Psoas muscle (tissue), 8 donors: ENCODE measurements at regions of chr5 and their contacts with region 1.

Region 1: GRCh38 chr5:168987543-168988300 is 313.2 kb downstream of the SLIT3 start:
- DNase-seq: peak; percentile 58 to 70
- ATAC-seq: peak in 3 of 4 donors; percentile 34 to 62 (median 58)
- H3K4me3 ChIP-seq: no peak overlapping the region
- H3K27ac ChIP-seq: no peak overlapping the region
- H3K4me1 ChIP-seq: no peaks in the 10 kb centered on the region
- H3K27me3 ChIP-seq: no peaks in the 10 kb centered on the region
- CTCF ChIP-seq: peak; percentile 83

Region 2: GRCh38 chr5:168679515-168679920 is 308.2 kb before region 1 on chr5:
- intact Hi-C with region 1: loop called in 1 of 2 experiments (anchors 10 kb)
- DNase-seq: peak; percentile 53 to 74
- ATAC-seq: peak in 3 of 4 donors; percentile 37 to 65 (median 63)
- H3K4me3 ChIP-seq: no peak overlapping the region
- H3K27ac ChIP-seq: no peak overlapping the region
- H3K4me1 ChIP-seq: no peaks in the 10 kb centered on the region
- H3K27me3 ChIP-seq: no peaks in the 10 kb centered on the region
- CTCF ChIP-seq: peak; percentile 85

Region 3: DNA sequence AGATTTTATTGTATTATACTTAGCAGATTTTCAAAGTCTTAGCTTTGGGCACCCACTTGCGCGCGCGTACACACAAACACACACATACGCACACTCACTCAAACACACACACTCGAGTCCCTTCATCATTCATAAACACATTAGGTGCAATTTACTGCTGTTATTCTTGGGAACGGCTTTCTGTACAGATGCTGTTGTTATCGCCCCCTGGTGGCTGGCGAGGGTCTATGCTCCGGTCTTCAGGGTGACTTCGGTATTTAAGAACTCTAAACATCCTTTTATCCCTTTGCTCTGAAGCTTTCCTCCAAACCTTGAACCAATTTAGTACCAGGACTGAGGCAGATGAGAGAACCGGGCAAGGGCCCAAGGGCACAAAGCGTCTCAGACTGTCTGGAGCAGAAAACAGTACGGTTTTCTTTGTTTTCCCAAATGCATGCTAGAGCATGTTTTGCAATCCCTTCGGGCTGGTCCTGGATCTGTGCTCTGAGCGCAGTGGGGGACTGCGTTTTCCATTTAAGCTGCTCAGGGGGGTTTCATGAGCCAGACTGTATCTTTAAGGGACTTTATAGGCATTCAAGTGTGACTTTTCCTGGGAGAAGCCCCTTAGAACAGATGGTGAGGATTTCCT is 314.9 kb after region 1 on chr5:
- intact Hi-C with region 1: loop called (anchors 2 to 5 kb)
- DNase-seq: peak; percentile 67 to 75
- ATAC-seq: peak in 2 of 4 donors; percentile 41 to 70
- H3K4me3 ChIP-seq: no peak overlapping the region
- H3K27ac ChIP-seq: no peak overlapping the region
- H3K4me1 ChIP-seq: no peaks in the 10 kb centered on the region
- H3K27me3 ChIP-seq: peaks cover 0 to 49% (median 18%) of the 10 kb centered on the region in 3 donors
- CTCF ChIP-seq: peak; percentile 76

Region 4: GRCh38 chr5:169567079-169567478 is 579.4 kb after region 1 on chr5:
- intact Hi-C with region 1: loop called in 1 of 2 experiments (anchors 5 kb)
- DNase-seq: no peak
- ATAC-seq: no peak
- H3K4me3 ChIP-seq: no peak overlapping the region
- H3K27ac ChIP-seq: no peak overlapping the region
- H3K4me1 ChIP-seq: no peaks in the 10 kb centered on the region
- H3K27me3 ChIP-seq: peaks cover 3 to 10% (median 5%) of the 10 kb centered on the region in 3 donors
- CTCF ChIP-seq: no peak

Region 5: DNA sequence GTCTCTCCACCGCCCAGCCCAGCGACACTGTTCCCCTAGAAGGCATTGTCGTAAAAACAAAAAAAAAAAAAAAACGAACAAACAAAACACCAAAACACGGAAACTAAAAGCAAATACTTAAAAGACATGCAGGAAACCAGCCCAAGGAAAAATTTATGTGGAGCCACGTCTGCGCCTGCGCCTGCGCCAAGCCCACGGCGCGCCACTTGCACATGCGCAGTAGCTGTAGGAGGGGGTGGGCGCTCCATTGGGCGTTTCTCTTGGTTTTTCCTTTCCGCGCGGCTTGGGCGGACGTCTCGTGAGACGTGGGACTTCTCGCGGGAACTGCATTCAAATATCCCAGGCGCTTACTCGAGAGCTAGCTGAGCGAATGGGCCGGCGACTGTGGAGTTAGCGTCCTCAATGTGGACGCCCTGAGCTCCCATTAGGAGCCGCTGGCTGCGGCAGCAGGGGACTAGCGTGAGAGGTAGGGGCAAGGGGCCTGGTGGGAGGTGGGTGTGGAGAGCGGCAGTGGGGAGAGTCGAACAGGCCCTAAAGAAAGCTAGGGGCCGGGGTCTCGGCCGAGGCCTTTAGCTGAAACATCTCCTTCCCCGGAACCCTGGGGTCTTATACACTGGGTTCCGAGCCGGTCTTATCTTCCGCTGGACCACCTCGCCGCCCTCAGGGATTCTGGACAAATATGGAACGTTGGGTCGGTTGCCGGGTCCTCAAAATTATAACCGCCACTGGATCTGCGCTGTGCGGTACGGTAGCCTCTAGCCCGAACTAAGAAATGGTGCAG is 595.9 kb after region 1 on chr5 and contains the start of gene SPDL1:
- intact Hi-C with region 1: loop called (anchors 2 to 5 kb)
- DNase-seq: peak; percentile 92 to 96
- ATAC-seq: peak; percentile 98 to 99 (median 98)
- H3K4me3 ChIP-seq: peak within 1 kb of the TSS; percentile 86
- H3K27ac ChIP-seq: peak within 1 kb of the TSS; percentile 70
- H3K4me1 ChIP-seq: peaks cover 7% of the 10 kb centered on the region
- H3K27me3 ChIP-seq: no peaks in the 10 kb centered on the region
- CTCF ChIP-seq: no peak
- total RNA-seq, gene SPDL1: 1.7 to 2.9 (median 2.4) TPM